ENCODE measurements at regions of chr14 and their contacts with region 1.

Region 1: GRCh38 chr14:74599321-74599761 is 12.7 kb downstream of the LTBP2 start:
- DNase-seq: no peak
- ATAC-seq: no peak
- H3K4me3 Mint-ChIP-seq: no peak overlapping the region
- H3K27ac Mint-ChIP-seq: no peak overlapping the region
- H3K4me1 Mint-ChIP-seq: no peaks in the 10 kb centered on the region
- H3K27me3 Mint-ChIP-seq: no peaks in the 10 kb centered on the region

Region 2: DNA sequence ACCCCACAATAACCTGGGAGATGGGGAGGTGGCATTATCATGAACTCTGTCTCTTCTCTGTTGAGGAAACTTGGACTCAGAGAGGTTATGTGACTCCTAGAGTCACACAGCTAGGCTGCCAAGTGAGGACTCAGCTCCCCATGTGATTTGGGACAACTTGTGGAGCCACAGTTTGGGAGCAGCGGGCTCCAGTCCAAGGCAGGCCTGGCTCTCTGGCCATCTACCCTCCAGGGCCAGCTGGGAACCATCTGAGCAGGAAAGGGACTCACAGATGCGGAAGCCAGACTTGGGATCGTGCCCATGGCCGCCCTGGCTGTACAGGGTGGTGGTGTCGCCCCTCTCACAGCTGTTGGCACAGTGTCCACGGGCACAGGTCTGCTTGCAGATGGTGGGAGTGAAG is 46.7 kb before region 1 on chr14:
- CTCF ChIA-PET with region 1: no interaction called
- POLR2A ChIA-PET with region 1: no interaction called
- intact Hi-C with region 1: no loop called
- DNase-seq: no peak
- ATAC-seq: no peak
- H3K4me3 Mint-ChIP-seq: no peak overlapping the region
- H3K27ac Mint-ChIP-seq: no peak overlapping the region
- H3K4me1 Mint-ChIP-seq: peaks cover 2% of the 10 kb centered on the region
- H3K27me3 Mint-ChIP-seq: no peaks in the 10 kb centered on the region

Region 3: GRCh38 chr14:74836251-74836960 is 237.1 kb after region 1 on chr14:
- CTCF ChIA-PET with region 1: no interaction called
- POLR2A ChIA-PET with region 1: interaction called, 10 read pairs
- intact Hi-C with region 1: no loop called
- DNase-seq: no peak
- ATAC-seq: no peak
- H3K4me3 Mint-ChIP-seq: no peak overlapping the region
- H3K27ac Mint-ChIP-seq: peak overlapping the region; percentile 95
- H3K4me1 Mint-ChIP-seq: peaks cover 64% of the 10 kb centered on the region
- H3K27me3 Mint-ChIP-seq: no peaks in the 10 kb centered on the region